Motor neuron (in vitro differentiated cells): ENCODE measurements at regions of chr5 and their contacts with region 1.

Region 1: DNA sequence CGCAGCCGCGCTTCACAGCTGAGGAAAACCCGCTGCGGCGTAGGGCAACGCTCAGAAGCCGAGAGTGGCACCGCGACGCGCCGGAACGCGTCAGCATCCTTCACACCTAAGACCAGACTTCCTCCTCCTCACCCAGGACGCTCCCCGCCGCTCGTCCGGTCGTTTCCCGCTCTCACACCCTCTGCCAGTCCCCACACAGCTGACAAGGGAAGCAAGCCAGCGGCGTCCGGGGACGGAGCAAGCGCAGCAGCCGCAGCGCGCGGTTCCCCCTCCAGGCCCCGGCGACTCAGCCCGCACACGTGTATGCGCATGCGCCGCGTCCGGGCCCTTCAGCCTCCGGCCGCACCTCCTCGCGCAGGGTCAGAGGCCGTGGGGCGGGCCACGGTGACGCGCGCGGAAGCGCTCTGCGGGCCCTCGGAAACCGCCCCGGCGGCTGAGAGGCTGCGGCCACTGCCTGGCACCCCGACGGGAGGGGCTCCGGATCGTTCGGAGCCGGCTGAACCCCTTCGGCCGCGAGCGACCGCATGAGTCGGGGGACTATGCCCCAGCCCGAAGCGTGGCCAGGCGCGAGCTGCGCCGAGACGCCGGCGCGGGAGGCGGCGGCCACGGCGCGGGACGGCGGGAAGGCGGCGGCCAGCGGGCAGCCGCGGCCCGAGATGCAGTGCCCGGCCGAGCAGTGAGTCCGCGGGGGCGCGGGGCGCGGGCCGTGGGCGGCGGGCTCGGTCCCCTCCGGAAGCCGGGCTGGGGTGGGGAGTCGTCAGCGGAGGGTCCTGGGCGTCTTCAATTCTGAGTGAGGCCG is at the start of gene OTULIN:
- ATAC-seq: peak; percentile 84 to 95 (median 91)
- H3K4me3 ChIP-seq: peak within 1 kb of the TSS; percentile 52 to 88 (median 64)
- H3K27ac ChIP-seq: peak within 1 kb of the TSS; percentile 80 to 86
- H3K4me1 ChIP-seq: peaks cover 13 to 19% of the 10 kb centered on the region in 2 donors
- total RNA-seq, gene OTULIN: 8.4 to 22.2 (median 11.7) TPM

Region 2: DNA sequence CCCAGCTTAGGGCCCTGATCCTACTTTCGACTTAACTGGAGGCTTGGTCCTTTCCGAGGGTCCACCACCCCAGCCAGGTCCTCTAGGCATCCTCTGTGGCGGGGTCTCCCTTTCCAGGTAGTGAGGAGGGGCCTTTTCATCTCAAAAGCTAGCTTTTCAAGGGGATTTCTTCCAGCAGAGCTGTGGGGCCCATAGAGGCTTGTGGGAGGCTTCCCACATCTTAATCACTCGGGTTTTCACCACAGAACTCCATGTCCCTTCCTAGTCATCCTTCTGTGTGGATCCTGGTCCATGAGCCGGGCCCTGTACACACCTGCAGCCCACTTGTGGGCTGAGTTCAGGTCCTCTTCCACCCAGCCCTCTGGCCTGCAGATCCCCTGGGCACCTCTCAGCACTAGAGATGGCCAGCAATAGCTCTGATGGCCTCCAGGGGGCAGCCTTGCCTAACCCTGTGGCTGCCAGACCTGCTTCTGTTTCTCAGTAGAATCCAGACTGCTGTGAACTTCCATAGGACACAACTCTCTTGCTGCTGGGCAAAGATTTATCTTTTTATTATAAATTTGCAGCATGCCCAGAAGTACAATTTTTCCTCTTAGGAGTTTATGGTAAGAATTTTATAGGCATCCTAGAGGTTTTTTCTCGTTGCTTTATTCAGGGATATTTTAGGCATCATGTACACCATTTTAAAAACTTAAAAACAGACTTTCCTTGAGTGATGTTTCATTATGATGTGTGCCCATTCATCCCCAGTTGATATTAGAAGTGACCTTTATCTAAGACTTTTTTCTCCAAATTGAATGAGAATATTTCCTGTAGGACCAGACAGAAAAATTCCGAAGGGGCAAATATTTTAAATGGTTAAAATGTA is 312.4 kb before region 1 on chr5:
- in situ Hi-C with region 1: loop called in 2 of 9 experiments (anchors 25 kb)
- ATAC-seq: peak; percentile 91 to 98 (median 96)
- H3K4me3 ChIP-seq: no peak overlapping the region
- H3K27ac ChIP-seq: no peak overlapping the region
- H3K4me1 ChIP-seq: peaks cover 8 to 11% of the 10 kb centered on the region in 2 donors

Region 3: DNA sequence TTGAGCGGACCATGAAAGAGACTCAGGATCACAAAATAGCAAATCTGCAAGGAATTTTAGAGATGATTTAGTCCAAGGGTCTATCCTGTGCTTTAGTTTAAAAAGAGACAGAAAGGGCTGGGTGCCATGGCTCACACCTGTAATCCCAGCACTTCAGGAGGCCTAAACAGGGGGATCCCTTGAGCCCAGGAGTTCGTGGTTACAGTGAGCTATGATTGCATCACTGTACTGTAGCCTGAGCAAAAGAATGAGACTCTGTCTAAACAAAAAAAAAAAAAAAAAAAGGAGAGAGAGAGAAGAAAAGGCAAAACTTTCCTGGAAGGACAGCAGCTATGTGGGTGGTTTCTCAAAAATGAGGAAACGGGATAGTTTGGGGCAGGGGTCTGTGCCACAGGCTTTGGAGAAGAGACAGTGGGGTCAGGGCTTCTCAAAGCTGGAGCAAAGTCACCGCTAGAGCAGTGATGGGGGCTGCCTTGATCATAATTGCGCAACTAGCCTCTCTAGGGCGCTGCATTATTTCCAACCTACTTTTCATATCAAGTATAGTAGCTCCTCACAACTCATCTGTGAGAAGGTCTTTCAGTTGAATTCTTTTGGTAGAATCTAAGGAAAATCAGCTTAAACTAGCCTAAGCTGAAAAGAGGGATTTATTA is 215.6 kb after region 1 on chr5:
- in situ Hi-C with region 1: no loop called
- ATAC-seq: peak in 3 of 8 experiments; percentile 53 to 71 (median 59)
- H3K4me3 ChIP-seq: no peak overlapping the region
- H3K27ac ChIP-seq: no peak overlapping the region
- H3K4me1 ChIP-seq: peaks cover 0 to 7% of the 10 kb centered on the region in 2 donors

Region 4: DNA sequence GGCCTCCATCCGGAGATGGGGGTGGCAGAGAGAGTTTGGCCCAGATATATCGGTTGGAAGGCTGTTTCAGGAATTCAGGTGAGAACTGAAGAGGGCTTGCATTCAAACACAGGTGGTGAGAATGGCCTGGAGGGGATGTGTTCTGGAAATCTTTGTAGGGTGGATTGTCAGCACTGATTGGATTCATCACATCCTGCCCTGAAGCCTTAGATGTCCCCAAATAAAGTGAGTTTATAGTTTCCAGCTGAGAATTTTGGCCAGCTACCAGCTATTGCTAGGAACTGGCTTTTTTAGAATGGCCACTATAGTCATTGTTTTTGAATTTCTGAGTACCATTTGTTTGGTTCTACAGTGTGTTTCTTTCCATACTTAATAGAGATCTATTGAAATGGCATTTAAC is 253.2 kb after region 1 on chr5:
- in situ Hi-C with region 1: no loop called
- ATAC-seq: peak in 2 of 8 experiments; percentile 26 to 57
- H3K4me3 ChIP-seq: no peak overlapping the region
- H3K27ac ChIP-seq: no peak overlapping the region
- H3K4me1 ChIP-seq: no peaks in the 10 kb centered on the region